Activated CD8-positive, alpha-beta T cell treated with anti-CD3 and anti-CD28 coated beads for 36 hours (primary cell): ENCODE measurements at regions of chr14 and their contacts with region 1.

Region 1: GRCh38 chr14:55731881-55732498 is 152.0 kb downstream of the KTN1 start:
- DNase-seq: peak; percentile 72
- ATAC-seq: peak; percentile 53
- H3K4me3 Mint-ChIP-seq: no peak overlapping the region
- H3K27ac Mint-ChIP-seq: no peak overlapping the region
- H3K4me1 Mint-ChIP-seq: no peaks in the 10 kb centered on the region
- H3K27me3 Mint-ChIP-seq: no peaks in the 10 kb centered on the region
- CTCF ChIP-seq: peak; percentile 78

Region 2: GRCh38 chr14:55864890-55865655 is 133.1 kb after region 1 on chr14:
- CTCF ChIA-PET with region 1: no interaction called
- POLR2A ChIA-PET with region 1: no interaction called
- intact Hi-C with region 1: no loop called
- DNase-seq: no peak
- ATAC-seq: no peak
- H3K4me3 Mint-ChIP-seq: no peak overlapping the region
- H3K27ac Mint-ChIP-seq: no peak overlapping the region
- H3K4me1 Mint-ChIP-seq: no peaks in the 10 kb centered on the region
- H3K27me3 Mint-ChIP-seq: peaks cover 1% of the 10 kb centered on the region
- CTCF ChIP-seq: peak; percentile 25

Region 3: DNA sequence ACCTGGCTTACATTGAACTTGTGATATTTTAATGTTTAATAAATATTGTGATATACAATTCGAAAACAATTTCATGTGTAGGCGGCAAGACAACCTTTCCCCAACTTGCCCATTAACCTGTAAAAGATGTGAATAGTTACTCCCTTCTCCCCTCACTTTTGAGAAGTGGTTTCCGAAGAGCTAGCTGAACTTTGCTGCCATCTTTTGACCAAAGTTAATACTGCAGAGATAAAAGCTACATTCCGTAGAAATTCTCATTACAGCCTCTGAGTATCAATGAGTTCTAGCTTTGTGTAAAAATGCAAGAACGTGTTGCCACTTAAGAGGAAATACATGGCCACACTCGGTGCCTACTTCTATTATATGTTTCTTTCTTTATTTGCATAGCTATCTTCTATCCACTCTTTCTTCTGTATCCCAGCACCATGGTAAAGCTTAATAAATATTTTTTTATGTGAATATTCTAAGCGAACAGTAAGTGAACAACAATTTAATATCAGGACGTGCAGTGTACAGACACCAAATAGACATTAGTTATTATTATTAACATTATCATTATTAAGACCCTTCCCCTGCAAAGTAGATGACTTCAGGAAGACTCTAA is 742.5 kb after region 1 on chr14:
- CTCF ChIA-PET with region 1: interaction called, 15 read pairs
- POLR2A ChIA-PET with region 1: no interaction called
- intact Hi-C with region 1: loop called (anchors 10 kb)
- DNase-seq: no peak
- ATAC-seq: peak; percentile 66
- H3K4me3 Mint-ChIP-seq: no peak overlapping the region
- H3K27ac Mint-ChIP-seq: no peak overlapping the region
- H3K4me1 Mint-ChIP-seq: no peaks in the 10 kb centered on the region
- H3K27me3 Mint-ChIP-seq: no peaks in the 10 kb centered on the region
- CTCF ChIP-seq: peak; percentile 72